ENCODE measurements at regions of chr7 and their contacts with region 1.

Region 1: GRCh38 chr7:816300-816750 is 16.0 kb upstream of the SUN1 start:
- DNase-seq: peak; percentile 94
- ATAC-seq: peak; percentile 92
- H3K4me3 Mint-ChIP-seq: peak overlapping the region; percentile 81
- H3K27ac Mint-ChIP-seq: no peak overlapping the region
- H3K4me1 Mint-ChIP-seq: peaks cover 64% of the 10 kb centered on the region
- H3K27me3 Mint-ChIP-seq: no peaks in the 10 kb centered on the region
- CTCF ChIP-seq: no peak

Region 2: DNA sequence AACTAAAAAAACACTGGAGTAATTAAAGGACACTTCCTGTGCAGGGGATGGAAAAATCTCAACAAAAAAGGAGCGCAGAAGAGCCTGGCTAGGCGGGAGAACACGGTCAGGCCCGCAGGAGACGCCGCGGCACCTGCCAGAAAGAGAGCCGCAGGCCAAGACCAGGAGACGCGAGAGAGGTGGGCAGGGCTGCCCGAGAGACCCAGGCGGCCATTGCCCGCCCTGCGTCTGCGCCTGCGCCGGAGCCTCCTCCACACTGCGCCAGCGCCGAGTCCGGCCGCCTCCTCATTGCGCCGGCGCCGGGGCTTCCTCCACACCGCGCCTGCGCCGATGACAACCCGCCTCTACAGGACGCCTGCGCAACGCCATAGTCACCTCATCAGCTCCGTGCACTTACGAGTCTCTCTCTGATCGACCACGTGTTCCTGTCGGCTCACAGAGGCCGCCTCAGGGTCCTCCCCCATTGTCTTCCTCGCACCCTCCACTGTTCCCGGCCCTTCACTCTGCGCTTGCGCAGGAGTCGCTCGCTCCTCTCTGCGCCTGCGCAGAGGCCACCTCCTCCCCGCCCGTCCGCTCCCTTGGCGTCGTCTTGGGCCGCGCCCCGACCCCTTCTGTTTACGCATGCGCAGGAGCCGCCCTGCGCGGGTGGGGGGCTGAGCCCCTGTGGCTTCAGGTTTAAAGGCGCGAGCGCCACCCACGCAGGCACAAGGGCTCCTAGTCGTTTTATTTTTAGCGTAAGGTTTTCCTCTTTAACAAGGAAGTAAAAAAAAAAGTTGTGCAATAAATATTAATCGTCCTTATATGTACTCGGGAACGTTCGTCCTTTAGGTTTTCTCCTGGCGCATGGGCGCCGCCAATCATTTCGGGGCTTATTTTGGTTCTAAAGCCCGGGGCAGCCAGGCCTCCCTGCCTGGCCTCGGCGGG is 667.1 kb before region 1 on chr7:
- CTCF ChIA-PET with region 1: no interaction called
- POLR2A ChIA-PET with region 1: interaction called, 4 read pairs
- intact Hi-C with region 1: loop called (anchors 5 kb)
- DNase-seq: peak; percentile 98
- ATAC-seq: peak; percentile 96
- H3K4me3 Mint-ChIP-seq: peak overlapping the region; percentile 95
- H3K27ac Mint-ChIP-seq: peak overlapping the region; percentile 100
- H3K4me1 Mint-ChIP-seq: peaks cover 36% of the 10 kb centered on the region
- H3K27me3 Mint-ChIP-seq: no peaks in the 10 kb centered on the region
- CTCF ChIP-seq: no peak

Region 3: GRCh38 chr7:726084-726853 is 90.1 kb before region 1 on chr7 and contains the start of gene DNAAF5:
- CTCF ChIA-PET with region 1: no interaction called
- POLR2A ChIA-PET with region 1: no interaction called
- intact Hi-C with region 1: loop called (anchors 2 kb)
- DNase-seq: peak; percentile 87
- ATAC-seq: peak; percentile 89
- H3K4me3 Mint-ChIP-seq: peak within 1 kb of the TSS; percentile 83
- H3K27ac Mint-ChIP-seq: peak within 1 kb of the TSS; percentile 65
- H3K4me1 Mint-ChIP-seq: peaks cover 22% of the 10 kb centered on the region
- H3K27me3 Mint-ChIP-seq: no peaks in the 10 kb centered on the region
- CTCF ChIP-seq: no peak
- total RNA-seq, gene DNAAF5: 23.5 and 25.9 TPM in 2 replicates

Region 4: DNA sequence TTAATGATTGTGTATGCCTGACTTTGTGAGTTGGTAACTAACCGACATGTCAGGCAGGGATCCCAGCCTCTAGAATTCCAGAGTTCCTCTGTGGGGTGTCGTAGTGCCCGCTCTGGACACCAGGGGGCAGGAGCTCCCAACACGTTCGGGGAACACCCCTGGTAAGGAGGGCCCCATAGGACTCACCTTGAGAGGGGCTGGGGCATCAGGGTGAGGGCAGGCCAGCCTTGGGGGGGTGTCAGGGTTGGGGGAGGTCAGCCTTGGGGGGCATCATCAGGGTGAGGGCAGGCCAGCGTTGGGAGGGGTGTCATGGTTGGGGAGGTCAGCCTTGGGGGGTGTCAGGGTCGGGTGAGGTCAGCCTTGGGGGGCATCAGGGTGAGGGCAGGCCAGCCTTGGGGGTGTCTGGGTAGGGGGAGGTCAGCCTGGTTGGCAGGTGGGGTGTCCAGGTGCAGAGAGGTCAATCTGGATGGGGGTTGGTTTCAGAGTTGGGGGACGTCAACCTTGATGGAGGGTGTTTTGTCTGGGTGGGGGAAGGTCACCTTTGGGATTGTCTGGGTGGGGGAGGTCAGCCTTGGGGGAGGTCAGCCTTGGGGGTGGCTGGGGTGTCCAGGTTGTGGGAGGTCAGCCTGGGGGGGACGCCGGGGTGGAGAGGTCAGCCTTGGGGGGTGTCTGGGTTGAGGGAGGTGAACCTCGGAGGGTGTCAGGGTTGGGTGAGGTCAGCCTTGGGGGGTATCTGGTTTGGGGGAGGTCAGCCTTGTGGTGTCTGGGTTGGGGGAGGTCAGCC is 29.7 kb before region 1 on chr7:
- CTCF ChIA-PET with region 1: interaction called, 4 read pairs
- POLR2A ChIA-PET with region 1: no interaction called
- intact Hi-C with region 1: loop called (anchors 1 kb)
- DNase-seq: peak; percentile 63
- ATAC-seq: peak; percentile 98
- H3K4me3 Mint-ChIP-seq: no peak overlapping the region
- H3K27ac Mint-ChIP-seq: no peak overlapping the region
- H3K4me1 Mint-ChIP-seq: no peaks in the 10 kb centered on the region
- H3K27me3 Mint-ChIP-seq: no peaks in the 10 kb centered on the region
- CTCF ChIP-seq: no peak

Region 5: GRCh38 chr7:831596-832166 is 15.4 kb after region 1 on chr7:
- CTCF ChIA-PET with region 1: interaction called, 3 read pairs
- POLR2A ChIA-PET with region 1: interaction called, 30 read pairs
- intact Hi-C with region 1: loop called (anchors 1 kb)
- DNase-seq: no peak
- ATAC-seq: peak; percentile 67
- H3K4me3 Mint-ChIP-seq: peak overlapping the region; percentile 74
- H3K27ac Mint-ChIP-seq: peak overlapping the region; percentile 94
- H3K4me1 Mint-ChIP-seq: peaks cover 47% of the 10 kb centered on the region
- H3K27me3 Mint-ChIP-seq: no peaks in the 10 kb centered on the region
- CTCF ChIP-seq: no peak

Region 6: DNA sequence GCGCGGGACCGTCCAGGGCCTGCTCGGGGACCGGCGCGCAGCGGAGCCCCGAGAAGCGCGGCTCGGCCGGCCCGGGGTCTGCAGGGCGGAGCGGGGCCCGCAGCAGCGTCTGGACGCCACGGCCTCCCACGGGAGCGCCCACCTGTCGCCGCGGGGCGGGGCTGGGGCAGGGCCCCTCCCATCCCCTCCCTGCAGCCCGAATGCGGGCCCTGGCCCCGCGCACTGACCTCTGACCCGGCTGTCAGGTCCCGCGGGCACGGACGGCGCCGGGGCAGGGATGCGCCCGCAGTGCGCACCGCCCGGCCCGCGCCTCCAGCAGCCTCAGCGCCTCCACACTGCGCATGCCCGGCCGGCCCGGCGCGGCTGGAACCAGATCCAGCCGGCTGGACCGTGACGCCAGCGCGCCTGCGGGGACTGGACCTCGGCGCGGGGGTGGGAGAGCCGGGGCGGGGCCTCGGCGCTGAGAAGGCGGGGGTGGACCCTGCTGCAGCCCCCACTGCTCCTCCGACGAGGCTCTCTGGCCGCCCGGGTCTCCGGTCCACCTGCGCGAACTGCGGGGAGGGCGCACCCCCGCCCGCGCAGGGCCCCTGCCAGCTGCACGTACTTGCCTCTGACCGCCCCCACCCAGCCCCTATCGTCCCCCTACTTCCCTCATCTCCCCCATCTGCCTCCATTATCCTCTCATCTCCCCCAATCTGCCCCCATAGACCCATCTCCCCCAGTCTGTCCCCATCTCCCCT is 211.9 kb after region 1 on chr7:
- CTCF ChIA-PET with region 1: no interaction called
- POLR2A ChIA-PET with region 1: no interaction called
- intact Hi-C with region 1: loop called (anchors 10 kb)
- DNase-seq: peak; percentile 85
- ATAC-seq: peak; percentile 38
- H3K4me3 Mint-ChIP-seq: peak overlapping the region; percentile 91
- H3K27ac Mint-ChIP-seq: no peak overlapping the region
- H3K4me1 Mint-ChIP-seq: peaks cover 61% of the 10 kb centered on the region
- H3K27me3 Mint-ChIP-seq: no peaks in the 10 kb centered on the region
- CTCF ChIP-seq: no peak

Region 7: DNA sequence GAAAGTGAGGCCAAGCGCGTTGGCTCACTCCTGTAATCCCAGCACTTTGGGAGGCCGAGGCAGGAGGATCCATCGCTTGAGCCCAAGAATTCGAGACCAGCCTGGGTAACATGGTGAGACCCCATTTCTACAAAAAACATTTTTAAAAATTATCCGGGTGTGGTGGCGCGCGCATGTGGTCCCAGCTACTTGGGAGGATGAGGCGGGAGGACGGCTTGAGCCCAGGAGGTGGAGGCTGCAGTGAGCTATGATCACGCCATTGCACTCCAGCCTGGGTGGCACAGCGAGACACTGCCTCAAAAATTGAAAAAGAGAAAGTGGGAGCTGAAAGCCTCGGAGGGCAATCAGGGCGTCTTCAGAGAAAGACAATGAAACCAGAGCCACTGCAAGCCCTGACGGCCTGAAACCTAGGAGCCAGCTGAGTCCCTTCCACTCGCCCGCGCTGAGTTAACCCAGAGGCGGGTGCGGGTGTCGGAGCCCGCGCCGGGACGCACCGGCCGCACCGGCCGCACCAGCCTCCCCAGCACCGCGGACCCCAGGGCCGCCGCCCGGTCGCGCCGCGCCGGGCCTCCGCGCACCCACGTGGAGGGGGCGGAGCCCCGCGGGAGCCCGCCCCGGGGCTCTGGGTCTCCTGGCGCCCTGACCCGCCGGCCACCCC is 321.3 kb after region 1 on chr7:
- CTCF ChIA-PET with region 1: no interaction called
- POLR2A ChIA-PET with region 1: no interaction called
- intact Hi-C with region 1: loop called (anchors 5 kb)
- DNase-seq: no peak
- ATAC-seq: peak; percentile 62
- H3K4me3 Mint-ChIP-seq: peak overlapping the region; percentile 86
- H3K27ac Mint-ChIP-seq: peak overlapping the region; percentile 70
- H3K4me1 Mint-ChIP-seq: peaks cover 52% of the 10 kb centered on the region
- H3K27me3 Mint-ChIP-seq: no peaks in the 10 kb centered on the region
- CTCF ChIP-seq: no peak

Region 8: GRCh38 chr7:2530071-2530967 is 1714.0 kb after region 1 on chr7:
- CTCF ChIA-PET with region 1: no interaction called
- POLR2A ChIA-PET with region 1: no interaction called
- intact Hi-C with region 1: no loop called
- DNase-seq: peak; percentile 70
- ATAC-seq: peak; percentile 63
- H3K4me3 Mint-ChIP-seq: peak overlapping the region; percentile 79
- H3K27ac Mint-ChIP-seq: peak overlapping the region; percentile 97
- H3K4me1 Mint-ChIP-seq: peaks cover 61% of the 10 kb centered on the region
- H3K27me3 Mint-ChIP-seq: no peaks in the 10 kb centered on the region
- CTCF ChIP-seq: no peak

Measured in activated B cell treated with CpG ODN at 0.5 μM for 24 hours (primary cell).